PC-3 (cell line): ENCODE measurements at regions of chr7 and their contacts with region 1.

Region 1: GRCh38 chr7:33109005-33109757 is at the start of gene RP9:
- DNase-seq: peak; percentile 71
- ATAC-seq: peak; percentile 84
- H3K4me3 ChIP-seq: peak within 1 kb of the TSS; percentile 99
- H3K27ac ChIP-seq: peak within 1 kb of the TSS; percentile 23; the same call in 1 of the 2 replicates
- H3K4me1 ChIP-seq: peaks cover 20% of the 10 kb centered on the region; the same call in 1 of the 2 replicates
- H3K27me3 ChIP-seq: no peaks in the 10 kb centered on the region
- CTCF ChIP-seq: peak; percentile 46; the same call in 1 of the 2 replicates
- total RNA-seq, gene RP9: 24.6 and 33.9 TPM in 2 replicates

Region 2: DNA sequence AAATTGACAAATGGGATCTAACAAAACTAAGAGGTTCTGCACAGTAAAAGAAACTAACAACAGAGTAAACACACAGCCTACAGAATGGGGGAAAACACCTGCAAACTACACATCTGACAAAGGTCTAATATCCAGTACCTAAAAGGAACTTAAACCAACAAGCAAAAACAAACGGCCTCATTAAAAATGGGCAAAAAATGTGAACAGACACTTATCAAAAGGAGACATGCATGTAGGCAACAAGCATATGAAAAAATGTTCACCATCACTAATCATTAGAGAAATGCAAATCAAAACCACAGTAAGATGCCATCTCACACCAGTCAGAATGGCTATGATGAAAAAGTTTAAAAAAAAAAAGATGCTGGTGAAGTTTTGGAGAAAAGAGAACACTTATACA is 415.0 kb before region 1 on chr7:
- CTCF ChIA-PET with region 1: no interaction called
- POLR2A ChIA-PET with region 1: no interaction called
- intact Hi-C with region 1: loop called (anchors 5 kb)
- DNase-seq: no peak
- ATAC-seq: no peak
- H3K4me3 ChIP-seq: no peak overlapping the region
- H3K27ac ChIP-seq: no peak overlapping the region
- H3K4me1 ChIP-seq: no peaks in the 10 kb centered on the region; the same call in 1 of the 2 replicates
- H3K27me3 ChIP-seq: no peaks in the 10 kb centered on the region
- CTCF ChIP-seq: no peak

Region 3: DNA sequence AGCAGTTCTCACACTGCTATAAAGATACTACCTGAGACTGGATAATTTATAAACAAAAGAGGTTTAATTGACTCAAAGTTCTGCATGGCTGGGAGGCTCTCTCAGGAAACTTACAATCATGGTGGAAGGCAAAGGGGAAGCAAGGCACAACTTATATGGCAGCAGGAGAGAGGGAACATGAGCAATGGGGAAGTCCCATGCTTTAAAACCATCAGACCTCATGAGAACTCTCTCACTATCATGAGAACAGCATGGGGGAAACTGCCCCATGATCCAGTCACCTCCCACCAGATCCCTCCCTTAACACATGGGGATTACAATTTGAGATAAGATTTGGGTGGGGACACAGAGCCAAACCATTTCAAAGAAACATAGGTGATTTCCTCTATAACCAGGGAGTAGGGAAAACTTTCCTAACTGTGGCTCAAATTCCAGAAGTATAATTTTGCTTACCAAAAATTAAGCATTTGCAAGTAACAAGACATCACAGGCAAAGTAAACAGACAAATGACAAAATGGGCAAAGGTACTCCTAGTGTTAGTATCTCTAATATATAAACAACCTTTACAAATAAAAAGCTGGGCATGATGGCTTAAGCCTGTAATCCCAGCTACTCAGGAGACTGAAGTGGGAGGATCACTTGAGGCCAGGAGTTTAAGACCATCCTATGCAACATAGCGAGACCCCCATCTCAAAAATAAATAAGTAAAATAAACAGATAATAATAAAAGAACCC is 305.6 kb before region 1 on chr7:
- CTCF ChIA-PET with region 1: interaction called, 9 read pairs
- POLR2A ChIA-PET with region 1: no interaction called
- intact Hi-C with region 1: loop called (anchors 1 kb)
- DNase-seq: no peak
- ATAC-seq: no peak
- H3K4me3 ChIP-seq: no peak overlapping the region
- H3K27ac ChIP-seq: no peak overlapping the region
- H3K4me1 ChIP-seq: no peaks in the 10 kb centered on the region
- H3K27me3 ChIP-seq: no peaks in the 10 kb centered on the region
- CTCF ChIP-seq: no peak

Region 4: GRCh38 chr7:32891800-32892520 is 217.2 kb before region 1 on chr7:
- CTCF ChIA-PET with region 1: no interaction called
- POLR2A ChIA-PET with region 1: no interaction called
- intact Hi-C with region 1: loop called (anchors 5 kb)
- DNase-seq: peak; percentile 91
- ATAC-seq: peak; percentile 57
- H3K4me3 ChIP-seq: peak overlapping the region; percentile 98
- H3K27ac ChIP-seq: peak overlapping the region; percentile 71
- H3K4me1 ChIP-seq: peaks cover 13% of the 10 kb centered on the region
- H3K27me3 ChIP-seq: no peaks in the 10 kb centered on the region
- CTCF ChIP-seq: no peak

Region 5: GRCh38 chr7:33062782-33063443 is 46.3 kb before region 1 on chr7:
- CTCF ChIA-PET with region 1: interaction called, 7 read pairs
- POLR2A ChIA-PET with region 1: no interaction called
- intact Hi-C with region 1: loop called (anchors 2 kb)
- DNase-seq: peak; percentile 89
- ATAC-seq: peak; percentile 93
- H3K4me3 ChIP-seq: peak overlapping the region; percentile 85
- H3K27ac ChIP-seq: peak overlapping the region; percentile 31
- H3K4me1 ChIP-seq: peaks cover 26% of the 10 kb centered on the region; the same call in 1 of the 2 replicates
- H3K27me3 ChIP-seq: no peaks in the 10 kb centered on the region
- CTCF ChIP-seq: no peak

Region 6: GRCh38 chr7:33278095-33278494 is 168.9 kb after region 1 on chr7:
- CTCF ChIA-PET with region 1: no interaction called
- POLR2A ChIA-PET with region 1: no interaction called
- intact Hi-C with region 1: no loop called
- DNase-seq: no peak
- ATAC-seq: no peak; the same call in 1 of the 2 replicates
- H3K4me3 ChIP-seq: no peak overlapping the region
- H3K27ac ChIP-seq: no peak overlapping the region
- H3K4me1 ChIP-seq: no peaks in the 10 kb centered on the region
- H3K27me3 ChIP-seq: no peaks in the 10 kb centered on the region
- CTCF ChIP-seq: no peak